ENCODE measurements at regions of chr12 and their contacts with region 1.

Region 1: DNA sequence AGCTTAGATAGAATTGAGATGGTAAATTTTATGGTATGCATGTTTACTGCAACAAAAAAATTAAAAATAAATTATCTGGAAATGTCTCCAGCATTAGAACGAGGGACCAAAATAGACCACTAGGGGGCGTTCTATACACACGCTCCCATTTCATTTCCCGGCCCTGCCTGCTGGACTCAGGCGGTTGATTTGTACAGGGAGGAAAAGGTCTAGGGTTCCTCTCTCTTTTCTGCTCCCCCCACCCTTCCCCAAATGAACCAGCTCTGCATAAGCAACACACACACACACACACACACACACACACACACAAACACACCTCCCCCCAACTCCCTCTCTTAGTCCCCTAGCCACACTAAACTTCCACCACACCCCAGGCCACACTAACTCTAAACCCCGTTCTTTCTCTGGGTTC is 7.8 kb upstream of the DTX1 start:
- DNase-seq: no peak
- ATAC-seq: peak; percentile 92
- H3K4me3 ChIP-seq: no peak overlapping the region
- H3K27ac ChIP-seq: no peak overlapping the region
- H3K4me1 ChIP-seq: no peaks in the 10 kb centered on the region
- H3K27me3 ChIP-seq: peaks cover 12% of the 10 kb centered on the region
- CTCF ChIP-seq: peak; percentile 90

Region 2: GRCh38 chr12:113098446-113098896 is 49.7 kb after region 1 on chr12:
- CTCF ChIA-PET with region 1: interaction called, 4 read pairs
- POLR2A ChIA-PET with region 1: no interaction called
- in situ Hi-C with region 1: no loop called
- intact Hi-C with region 1: loop called (anchors 1 kb)
- DNase-seq: peak; percentile 83
- ATAC-seq: peak; percentile 75
- H3K4me3 ChIP-seq: no peak overlapping the region
- H3K27ac ChIP-seq: no peak overlapping the region
- H3K4me1 ChIP-seq: peaks cover 3% of the 10 kb centered on the region; the same call in 1 of the 2 replicates
- H3K27me3 ChIP-seq: no peaks in the 10 kb centered on the region
- CTCF ChIP-seq: peak; percentile 95

Region 3: DNA sequence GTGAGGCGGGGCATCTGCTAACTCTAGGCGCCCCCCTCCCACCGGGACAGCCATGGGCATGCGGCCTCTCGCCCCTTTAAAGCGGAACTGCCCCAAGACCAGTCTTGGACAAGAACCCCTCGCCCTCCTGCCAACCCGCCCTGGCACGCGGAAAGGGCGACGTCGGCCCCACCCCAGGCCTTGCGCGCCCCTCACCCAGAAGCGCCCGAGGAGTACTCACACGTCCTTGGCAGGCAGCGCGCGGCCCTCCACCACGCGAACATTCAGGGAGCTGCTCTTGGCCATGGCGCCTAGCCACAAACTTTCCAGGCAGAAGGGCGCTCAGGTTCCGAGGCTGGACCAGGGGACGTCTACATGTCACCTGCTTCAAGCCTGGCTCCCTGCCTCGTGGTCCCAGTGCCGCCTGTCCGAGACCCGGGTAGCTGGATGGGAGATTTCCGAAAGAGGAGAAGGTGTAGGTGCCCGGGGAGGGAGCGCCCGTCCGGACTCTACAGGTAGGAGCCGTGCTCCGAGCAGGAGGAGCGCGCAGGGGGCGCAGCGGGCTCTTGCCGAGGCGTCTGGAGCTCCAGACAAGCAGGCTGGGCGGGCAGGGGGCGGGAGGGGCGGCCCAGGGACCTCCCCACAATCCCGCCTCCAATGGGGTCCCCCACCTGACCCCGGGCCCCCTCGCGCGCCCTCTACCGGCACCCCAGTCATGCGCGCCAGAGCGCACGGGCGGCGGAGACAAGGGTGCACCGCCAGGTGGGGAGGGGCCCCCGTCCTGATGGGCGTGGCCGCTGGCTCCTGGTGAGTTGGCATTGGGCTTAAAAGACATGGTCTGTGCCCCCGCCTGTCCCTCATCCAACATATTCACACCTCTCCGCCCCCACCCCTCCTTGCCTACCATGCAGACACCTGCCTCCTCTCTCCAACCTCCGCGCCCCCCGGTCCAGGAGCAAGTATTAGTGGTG is 86.7 kb after region 1 on chr12 and contains the start of gene RASAL1:
- CTCF ChIA-PET with region 1: no interaction called
- POLR2A ChIA-PET with region 1: no interaction called
- in situ Hi-C with region 1: no loop called
- intact Hi-C with region 1: no loop called
- DNase-seq: no peak
- ATAC-seq: peak; percentile 86
- H3K4me3 ChIP-seq: peak within 1 kb of the TSS; percentile 26 to 41
- H3K27ac ChIP-seq: no peak within 1 kb of the TSS
- H3K4me1 ChIP-seq: peaks cover 4% of the 10 kb centered on the region
- H3K27me3 ChIP-seq: no peaks in the 10 kb centered on the region
- CTCF ChIP-seq: peak; percentile 92
- total RNA-seq, gene RASAL1: 0.28 TPM

Region 4: GRCh38 chr12:113152835-113153814 is 104.4 kb after region 1 on chr12:
- CTCF ChIA-PET with region 1: interaction called, 3 read pairs
- POLR2A ChIA-PET with region 1: no interaction called
- in situ Hi-C with region 1: loop called (anchors 25 kb)
- intact Hi-C with region 1: loop called (anchors 2 kb)
- DNase-seq: peak; percentile 47
- ATAC-seq: peak; percentile 92
- H3K4me3 ChIP-seq: peak overlapping the region; percentile 45 to 60
- H3K27ac ChIP-seq: no peak overlapping the region
- H3K4me1 ChIP-seq: peaks cover 12% of the 10 kb centered on the region; the same call in 1 of the 2 replicates
- H3K27me3 ChIP-seq: no peaks in the 10 kb centered on the region
- CTCF ChIP-seq: peak; percentile 88

Region 5: GRCh38 chr12:113174461-113175384 is 126.0 kb after region 1 on chr12:
- CTCF ChIA-PET with region 1: no interaction called
- POLR2A ChIA-PET with region 1: interaction called, 5 read pairs
- in situ Hi-C with region 1: loop called (anchors 25 kb)
- intact Hi-C with region 1: loop called (anchors 2 kb)
- DNase-seq: no peak
- ATAC-seq: peak; percentile 87
- H3K4me3 ChIP-seq: no peak overlapping the region
- H3K27ac ChIP-seq: no peak overlapping the region
- H3K4me1 ChIP-seq: no peaks in the 10 kb centered on the region
- H3K27me3 ChIP-seq: no peaks in the 10 kb centered on the region
- CTCF ChIP-seq: peak; percentile 99